H1 (cell line): ENCODE measurements at regions of chr1 and their contacts with region 1.

Region 1: GRCh38 chr1:21368515-21369289 is 71.2 kb upstream of the NBPF3 start:
- DNase-seq: peak; percentile 56 to 85
- H3K4me3 ChIP-seq: no peak overlapping the region
- H3K27ac ChIP-seq: no peak overlapping the region
- H3K4me1 ChIP-seq: no peaks in the 10 kb centered on the region; a peak in 1 of 7 replicates
- H3K27me3 ChIP-seq: no peaks in the 10 kb centered on the region
- CTCF ChIP-seq: peak; percentile 96 to 98 (median 98)
- EP300 ChIP-seq: no peak
- POLR2A ChIP-seq: no peak
- RAD21 ChIP-seq: peak; percentile 100

Region 2: DNA sequence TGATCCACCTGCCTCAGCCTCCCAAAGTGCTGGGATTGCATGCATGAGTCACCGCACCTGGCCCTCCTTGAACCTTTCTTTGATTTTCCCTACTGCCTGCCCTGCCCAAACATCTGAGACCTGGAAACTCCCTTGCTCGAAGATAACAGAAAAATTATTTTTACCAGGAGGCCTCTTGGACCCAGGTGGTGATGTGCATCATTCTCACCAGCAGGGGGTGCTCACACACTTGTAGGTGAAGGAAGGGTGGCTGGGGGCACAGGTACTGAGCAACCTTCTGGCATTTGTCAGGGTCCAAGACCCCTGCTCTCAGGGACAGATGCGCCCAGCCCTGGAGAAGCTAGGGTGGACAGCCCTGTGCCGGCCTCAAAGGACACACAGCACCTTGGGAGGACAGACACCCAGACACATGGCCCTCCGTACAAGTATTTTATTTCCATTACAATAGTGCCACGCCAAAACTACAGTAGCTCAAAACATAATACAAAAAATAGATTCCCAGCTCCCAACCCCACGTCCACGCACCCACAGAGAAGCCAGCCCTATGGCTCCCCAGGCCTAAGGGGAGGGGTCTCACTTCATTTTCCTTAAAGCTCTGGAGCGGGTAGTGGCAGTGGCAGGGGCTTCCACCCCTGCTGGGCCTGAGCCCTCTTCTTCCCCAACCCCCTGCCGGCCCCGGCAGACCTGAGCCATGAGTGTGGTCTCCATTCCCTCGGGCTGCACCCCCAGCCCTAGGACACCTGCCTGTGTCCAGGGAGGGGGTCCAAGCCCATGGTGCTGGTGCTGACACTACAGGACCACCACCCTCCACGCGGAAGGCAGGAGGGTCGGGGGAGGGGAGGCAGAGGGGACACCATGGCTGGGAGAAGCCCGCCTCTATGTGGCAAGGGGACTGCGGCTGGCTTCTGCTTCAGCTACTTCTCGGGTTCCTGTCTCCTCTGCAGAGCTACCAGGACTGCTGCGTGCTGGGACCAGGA is 151.6 kb before region 1 on chr1:
- CTCF ChIA-PET with region 1: interaction called, 165 read pairs
- POLR2A ChIA-PET with region 1: no interaction called
- DNase-seq: peak in 1 of 2 experiments; percentile 88
- H3K4me3 ChIP-seq: no peak overlapping the region
- H3K27ac ChIP-seq: no peak overlapping the region
- H3K4me1 ChIP-seq: peaks cover 0 to 5% (median 5%) of the 10 kb centered on the region in 4 experiments; a peak in 5 of 7 replicates
- H3K27me3 ChIP-seq: no peaks in the 10 kb centered on the region
- CTCF ChIP-seq: peak; percentile 60 to 86 (median 80)
- EP300 ChIP-seq: no peak
- POLR2A ChIP-seq: no peak
- RAD21 ChIP-seq: peak; percentile 43 to 67; a peak in 3 of 4 replicates

Region 3: DNA sequence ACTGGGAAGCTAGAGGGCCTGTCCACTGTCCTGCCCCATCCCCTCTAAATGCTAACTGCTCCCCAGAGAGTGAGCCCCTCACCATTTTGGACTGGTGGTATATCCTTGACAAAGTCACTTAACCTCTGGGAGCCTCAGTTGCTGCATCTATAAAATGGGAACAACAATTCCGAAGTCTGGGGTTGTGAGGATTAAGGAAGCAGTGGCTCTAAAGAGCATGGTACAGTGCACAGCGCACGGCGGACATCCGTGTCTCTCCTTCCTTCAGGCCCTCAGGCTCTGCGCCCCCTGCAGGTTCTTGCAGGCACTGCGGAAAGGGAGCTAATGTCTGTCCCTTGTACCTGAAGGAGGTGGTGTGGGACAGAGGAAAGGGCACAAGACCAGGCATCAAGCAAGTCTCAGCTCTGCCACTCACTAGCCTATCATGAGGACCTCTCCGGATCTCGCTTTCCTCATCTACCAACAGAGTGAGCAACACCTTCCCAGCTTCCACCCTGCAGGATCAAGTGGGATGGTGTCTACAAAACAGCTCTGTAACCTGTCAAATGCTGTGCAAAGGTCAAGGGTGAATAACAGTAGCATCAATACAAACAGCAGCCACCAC is 98.5 kb before region 1 on chr1:
- CTCF ChIA-PET with region 1: interaction called, 144 read pairs
- POLR2A ChIA-PET with region 1: no interaction called
- DNase-seq: peak; percentile 63 to 99
- H3K4me3 ChIP-seq: no peak overlapping the region
- H3K27ac ChIP-seq: no peak overlapping the region
- H3K4me1 ChIP-seq: no peaks in the 10 kb centered on the region; a peak in 2 of 7 replicates
- H3K27me3 ChIP-seq: no peaks in the 10 kb centered on the region
- CTCF ChIP-seq: peak; percentile 99 to 100 (median 100)
- EP300 ChIP-seq: no peak
- POLR2A ChIP-seq: no peak
- RAD21 ChIP-seq: peak; percentile 79 to 84

Region 4: GRCh38 chr1:21324368-21325141 is 44.1 kb before region 1 on chr1:
- CTCF ChIA-PET with region 1: interaction called, 21 read pairs
- POLR2A ChIA-PET with region 1: no interaction called
- DNase-seq: no peak
- H3K4me3 ChIP-seq: no peak overlapping the region
- H3K27ac ChIP-seq: peak overlapping the region; percentile 14; the same call in 1 of the 2 replicates
- H3K4me1 ChIP-seq: peaks cover 24 to 72% (median 55%) of the 10 kb centered on the region in 4 experiments
- H3K27me3 ChIP-seq: no peaks in the 10 kb centered on the region
- CTCF ChIP-seq: no peak
- EP300 ChIP-seq: no peak
- POLR2A ChIP-seq: no peak
- RAD21 ChIP-seq: no peak

Region 5: GRCh38 chr1:21468599-21468998 is 99.9 kb after region 1 on chr1:
- CTCF ChIA-PET with region 1: interaction called, 35 read pairs
- POLR2A ChIA-PET with region 1: no interaction called
- DNase-seq: peak in 1 of 2 experiments; percentile 80
- H3K4me3 ChIP-seq: no peak overlapping the region
- H3K27ac ChIP-seq: no peak overlapping the region
- H3K4me1 ChIP-seq: peaks cover 2 to 5% (median 4%) of the 10 kb centered on the region in 4 experiments; a peak in 5 of 7 replicates
- H3K27me3 ChIP-seq: no peaks in the 10 kb centered on the region
- CTCF ChIP-seq: peak; percentile 29 to 67 (median 55)
- EP300 ChIP-seq: no peak
- POLR2A ChIP-seq: no peak
- RAD21 ChIP-seq: peak; percentile 34 to 61; a peak in 3 of 4 replicates

Region 6: GRCh38 chr1:21517161-21517589 is 148.5 kb after region 1 on chr1:
- CTCF ChIA-PET with region 1: interaction called, 95 read pairs
- POLR2A ChIA-PET with region 1: no interaction called
- DNase-seq: no peak
- H3K4me3 ChIP-seq: no peak overlapping the region
- H3K27ac ChIP-seq: no peak overlapping the region
- H3K4me1 ChIP-seq: peaks cover 14 to 22% (median 17%) of the 10 kb centered on the region in 4 experiments
- H3K27me3 ChIP-seq: no peaks in the 10 kb centered on the region
- CTCF ChIP-seq: no peak
- EP300 ChIP-seq: no peak
- POLR2A ChIP-seq: no peak
- RAD21 ChIP-seq: no peak

Region 7: DNA sequence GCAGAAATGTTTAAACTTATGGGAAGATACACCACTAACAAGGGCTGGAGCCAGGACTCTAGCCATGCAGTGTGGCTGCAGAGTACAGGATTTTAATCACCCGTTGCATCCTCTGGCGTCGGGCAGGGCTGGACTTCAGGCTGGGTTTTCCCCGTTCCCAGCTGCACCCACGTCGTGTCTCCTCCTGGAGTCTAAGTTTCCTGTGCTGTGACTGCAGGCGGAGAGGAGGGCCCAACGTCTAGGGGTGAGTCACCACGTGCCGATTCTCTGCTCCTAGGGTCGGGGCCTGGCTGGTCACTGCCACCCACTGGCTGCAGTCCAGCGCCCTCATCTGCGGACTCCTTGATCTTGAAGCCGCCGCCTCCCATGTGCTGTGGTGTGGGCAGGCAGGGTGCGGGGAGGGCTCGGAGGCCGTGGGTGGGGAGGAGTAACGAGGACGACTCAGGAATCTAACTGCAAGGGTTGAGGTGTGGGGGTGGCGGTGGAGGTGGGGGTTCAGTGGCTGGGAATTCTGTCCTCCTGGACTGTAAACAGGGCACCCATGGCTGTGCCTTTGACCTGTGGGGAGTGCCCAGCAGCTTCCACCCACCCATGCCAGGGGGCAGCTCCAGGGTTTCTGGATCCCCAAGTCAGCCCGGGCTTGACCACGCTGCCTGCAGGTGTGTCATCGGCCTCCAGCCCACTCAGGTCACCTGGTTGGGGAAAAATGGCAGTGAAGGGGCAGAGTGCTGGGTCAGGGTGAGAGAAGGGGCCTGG is 218.3 kb after region 1 on chr1:
- CTCF ChIA-PET with region 1: interaction called, 63 read pairs
- POLR2A ChIA-PET with region 1: no interaction called
- DNase-seq: no peak
- H3K4me3 ChIP-seq: no peak overlapping the region
- H3K27ac ChIP-seq: no peak overlapping the region
- H3K4me1 ChIP-seq: peaks cover 5 to 21% (median 11%) of the 10 kb centered on the region in 4 experiments; a peak in 6 of 7 replicates
- H3K27me3 ChIP-seq: peaks cover 0 to 4% (median 1%) of the 10 kb centered on the region in 4 experiments; a peak in 2 of 7 replicates
- CTCF ChIP-seq: no peak
- EP300 ChIP-seq: no peak
- POLR2A ChIP-seq: no peak
- RAD21 ChIP-seq: peak; percentile 9 to 25; a peak in 2 of 4 replicates